ENCODE measurements at regions of chr2 and their contacts with region 1.

Region 1: GRCh38 chr2:27356382-27357181 is at the start of gene GTF3C2:
- DNase-seq: peak; percentile 89
- H3K4me3 Mint-ChIP-seq: peak within 1 kb of the TSS; percentile 98
- H3K27ac Mint-ChIP-seq: peak within 1 kb of the TSS; percentile 99
- H3K4me1 Mint-ChIP-seq: peaks cover 47% of the 10 kb centered on the region
- H3K27me3 Mint-ChIP-seq: no peaks in the 10 kb centered on the region
- total RNA-seq, gene GTF3C2: 86.3 and 86.6 TPM in 2 replicates

Region 2: DNA sequence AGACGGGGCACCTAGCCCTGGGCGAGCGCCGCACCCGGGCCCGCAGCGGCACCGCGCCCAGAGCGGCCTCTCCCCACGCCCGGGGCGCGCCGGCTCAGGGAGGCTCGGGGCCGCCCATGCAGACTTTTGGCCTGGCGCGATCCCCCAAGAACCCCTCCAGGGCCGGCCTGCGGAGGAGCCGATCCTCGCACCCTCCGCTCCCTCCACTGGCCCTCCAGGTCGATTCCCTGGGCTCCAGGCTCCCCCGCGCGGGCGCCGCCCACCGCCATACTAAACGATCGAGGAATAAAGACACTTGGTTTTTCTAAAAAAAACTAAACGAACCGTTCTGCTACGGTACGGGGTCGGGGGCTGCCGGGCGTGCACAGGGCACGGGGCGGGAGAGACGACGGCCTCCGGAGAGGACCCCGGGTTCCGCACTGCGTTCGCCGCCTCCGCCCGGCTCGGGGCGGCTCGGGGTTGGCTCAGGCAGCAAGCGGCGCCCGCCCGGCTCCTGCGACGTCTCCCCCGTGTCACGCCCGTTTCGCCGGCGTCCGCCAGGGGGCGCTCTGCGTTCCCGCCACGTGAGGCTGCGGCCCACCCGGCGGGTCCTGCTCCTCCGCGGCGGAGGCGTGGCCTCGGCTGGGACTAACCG is 270.4 kb before region 1 on chr2:
- intact Hi-C with region 1: loop called (anchors 1 kb)
- DNase-seq: peak; percentile 99
- H3K4me3 Mint-ChIP-seq: peak overlapping the region; percentile 89
- H3K27ac Mint-ChIP-seq: peak overlapping the region; percentile 76
- H3K4me1 Mint-ChIP-seq: peaks cover 27% of the 10 kb centered on the region
- H3K27me3 Mint-ChIP-seq: no peaks in the 10 kb centered on the region

Region 3: DNA sequence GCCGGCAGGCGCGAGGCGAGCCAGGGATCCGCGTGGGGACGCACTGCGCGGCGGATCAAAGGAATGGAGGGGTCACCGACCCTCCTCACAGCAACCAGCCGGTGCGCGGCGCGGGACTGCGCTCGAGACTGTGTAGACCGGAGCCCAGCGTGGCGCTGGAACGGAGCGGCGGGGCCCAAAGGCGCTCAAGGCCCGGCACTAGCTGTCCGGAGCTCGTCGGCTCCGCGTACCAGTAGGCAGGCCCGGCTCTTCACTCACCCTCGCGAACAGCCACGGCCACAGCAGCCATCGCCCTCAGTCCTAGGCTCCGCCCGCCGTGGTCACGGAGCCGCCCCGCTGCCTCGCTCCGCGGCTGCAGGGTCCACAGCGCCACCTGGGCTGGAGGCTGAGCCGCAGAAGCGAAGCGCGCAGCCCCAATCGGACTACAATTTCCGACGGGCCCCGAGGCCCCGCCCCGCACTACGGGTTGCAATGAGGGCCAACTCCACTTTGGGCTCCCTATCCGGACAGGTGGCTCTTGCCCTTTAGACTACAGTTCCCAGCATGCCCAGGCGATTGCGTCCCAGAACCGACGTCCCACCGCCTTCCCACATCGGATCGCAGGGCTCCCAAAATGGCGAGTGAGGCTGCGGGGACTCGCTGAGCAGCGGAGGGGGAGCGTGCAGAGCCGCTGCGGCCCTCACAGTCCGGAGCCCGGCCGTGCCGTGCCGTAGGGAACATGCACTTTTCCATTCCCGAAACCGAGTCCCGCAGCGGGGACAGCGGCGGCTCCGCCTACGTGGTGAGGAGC is 13.6 kb after region 1 on chr2 and contains the starts of genes EIF2B4 and SNX17:
- intact Hi-C with region 1: loop called (anchors 1 kb)
- DNase-seq: peak; percentile 100
- H3K4me3 Mint-ChIP-seq: peak within 1 kb of the TSS; percentile 96
- H3K27ac Mint-ChIP-seq: peak within 1 kb of the TSS; percentile 98
- H3K4me1 Mint-ChIP-seq: peaks cover 43% of the 10 kb centered on the region
- H3K27me3 Mint-ChIP-seq: no peaks in the 10 kb centered on the region
- total RNA-seq, gene EIF2B4: 53.9 and 55.8 TPM in 2 replicates
- total RNA-seq, gene SNX17: 134 and 137 TPM in 2 replicates

Region 4: GRCh38 chr2:27489498-27490397 is 133.2 kb after region 1 on chr2 and contains the start of gene IFT172:
- intact Hi-C with region 1: loop called (anchors 1 kb)
- DNase-seq: peak; percentile 98
- H3K4me3 Mint-ChIP-seq: peak within 1 kb of the TSS; percentile 91
- H3K27ac Mint-ChIP-seq: peak within 1 kb of the TSS; percentile 91
- H3K4me1 Mint-ChIP-seq: peaks cover 22% of the 10 kb centered on the region
- H3K27me3 Mint-ChIP-seq: peaks cover 13% of the 10 kb centered on the region
- total RNA-seq, gene IFT172: 13.4 and 13.5 TPM in 2 replicates

Region 5: GRCh38 chr2:27683390-27684071 is 326.9 kb after region 1 on chr2:
- intact Hi-C with region 1: loop called (anchors 1 kb)
- DNase-seq: peak; percentile 80
- H3K4me3 Mint-ChIP-seq: no peak overlapping the region
- H3K27ac Mint-ChIP-seq: peak overlapping the region; percentile 74
- H3K4me1 Mint-ChIP-seq: peaks cover 32% of the 10 kb centered on the region
- H3K27me3 Mint-ChIP-seq: no peaks in the 10 kb centered on the region

Measured in activated T-helper 1 cell treated with anti-CD3 and anti-CD28 coated beads, Interleukin-12 subunit alpha, Interleukin-12 subunit beta, Interleukin-2, Interleukin-4 antibody, amounts not matched to agents 30 ng/mL and 10 ng/mL and 1 ng/mL, durations not matched to agents 14 hours and 24 hours and 36 hours (primary cell).